Activated CD4-positive, alpha-beta memory T cell treated with anti-CD3 and anti-CD28 coated beads, Interleukin-2, amount 10 ng/mL, durations not matched to agents 7 days and 5 days (primary cell): ENCODE measurements at regions of chr14 and their contacts with region 1.

Region 1: DNA sequence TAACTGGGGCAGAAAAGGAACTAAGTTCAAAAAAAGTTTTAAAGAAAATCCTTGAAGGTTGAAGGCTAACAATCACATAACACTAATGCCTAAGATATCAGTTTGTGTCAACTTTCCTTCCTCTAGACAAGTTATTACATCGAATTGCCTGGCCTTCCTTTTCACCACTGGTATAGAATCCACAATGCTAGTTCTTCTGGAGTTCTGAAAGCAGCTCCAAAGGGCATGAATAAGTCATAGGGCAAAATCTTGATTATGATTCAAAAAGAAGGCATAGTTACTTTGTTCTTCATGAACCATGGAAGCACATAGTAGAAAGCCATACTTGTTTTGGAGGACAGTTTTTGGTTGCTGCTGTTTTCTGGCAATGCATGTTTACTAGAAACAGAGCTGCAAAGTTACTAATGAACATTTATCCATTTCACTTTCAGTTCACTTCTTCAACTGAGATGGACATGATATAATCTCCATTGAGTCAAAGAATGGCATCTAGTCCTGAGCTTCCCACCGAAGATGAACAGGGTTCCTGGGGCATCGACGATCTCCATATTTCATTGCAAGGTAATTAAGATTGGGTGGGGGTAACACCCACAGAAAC is 56.0 kb downstream of the SYNE2 start:
- DNase-seq: no peak
- H3K4me3 Mint-ChIP-seq: peak overlapping the region; percentile 15
- H3K27ac Mint-ChIP-seq: no peak overlapping the region
- H3K4me1 Mint-ChIP-seq: peaks cover 32% of the 10 kb centered on the region
- H3K27me3 Mint-ChIP-seq: no peaks in the 10 kb centered on the region

Region 2: DNA sequence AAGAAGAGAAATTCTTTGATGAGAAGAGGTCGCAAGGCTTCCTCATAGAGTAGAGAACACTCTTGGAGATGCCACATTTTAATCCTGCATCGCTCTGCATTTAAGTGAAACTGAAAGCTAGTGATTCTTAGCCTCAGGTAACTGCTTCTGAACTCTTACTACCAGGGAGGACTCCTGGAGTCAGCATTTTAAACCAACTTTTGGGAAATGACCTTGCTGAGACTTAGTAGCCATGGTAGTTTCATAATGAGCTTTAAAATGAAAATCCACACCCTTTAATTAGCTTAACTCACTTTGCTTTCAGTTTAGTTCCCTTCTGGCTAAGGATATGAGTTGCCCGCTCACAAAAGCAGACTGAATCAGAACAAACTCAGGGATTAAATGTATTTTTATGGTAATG is 24.3 kb after region 1 on chr14:
- CTCF ChIA-PET with region 1: interaction called, 3 read pairs
- POLR2A ChIA-PET with region 1: interaction called, 10 read pairs
- DNase-seq: no peak
- H3K4me3 Mint-ChIP-seq: peak overlapping the region; percentile 26
- H3K27ac Mint-ChIP-seq: peak overlapping the region; percentile 63
- H3K4me1 Mint-ChIP-seq: peaks cover 28% of the 10 kb centered on the region
- H3K27me3 Mint-ChIP-seq: no peaks in the 10 kb centered on the region